ENCODE measurements at regions of chr15 and their contacts with region 1.

Region 1: GRCh38 chr15:39171944-39172368 is 408.9 kb upstream of the THBS1 start:
- DNase-seq: peak; percentile 79

Region 2: DNA sequence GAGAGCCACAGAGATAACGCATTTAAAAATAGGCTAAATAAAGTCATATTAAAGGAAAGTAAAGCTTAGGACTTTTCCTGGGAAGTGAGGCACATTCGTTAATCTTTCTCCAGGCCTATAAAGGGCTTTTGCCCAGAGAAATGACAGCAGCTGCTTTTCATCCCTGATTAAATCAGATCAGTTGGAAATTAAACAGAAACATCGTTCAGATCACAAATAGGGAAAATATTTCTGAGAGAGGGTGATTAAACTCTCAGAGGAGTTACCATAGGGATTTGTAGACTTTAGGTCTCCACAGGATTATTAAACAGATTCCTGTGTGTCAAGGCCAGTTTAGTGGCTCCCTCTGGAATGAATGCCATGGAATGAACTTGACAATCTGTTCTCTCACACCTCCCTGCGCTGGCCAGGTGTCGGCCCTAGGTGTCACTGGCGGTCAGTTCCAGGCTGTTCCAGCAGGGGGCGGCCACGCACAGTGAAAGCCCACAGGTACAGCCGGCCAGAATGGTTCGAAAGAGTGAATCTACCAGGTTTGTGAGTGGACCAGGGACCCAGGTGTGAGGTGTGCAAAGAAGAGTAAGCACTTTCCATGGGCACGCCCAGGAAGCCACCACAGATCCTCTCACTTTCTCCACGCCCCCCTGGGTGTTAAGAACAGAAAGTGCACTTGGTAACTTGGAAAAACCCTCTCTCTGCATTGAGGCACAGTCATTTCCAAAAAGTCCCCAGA is 354.4 kb before region 1 on chr15:
- intact Hi-C with region 1: loop called in 1 of 2 experiments (anchors 10 kb)
- DNase-seq: peak; percentile 90

Region 3: GRCh38 chr15:39118510-39118909 is 53.4 kb before region 1 on chr15:
- intact Hi-C with region 1: no loop called
- DNase-seq: no peak

Region 4: GRCh38 chr15:39153716-39154115 is 18.2 kb before region 1 on chr15:
- intact Hi-C with region 1: no loop called
- DNase-seq: no peak

Region 5: DNA sequence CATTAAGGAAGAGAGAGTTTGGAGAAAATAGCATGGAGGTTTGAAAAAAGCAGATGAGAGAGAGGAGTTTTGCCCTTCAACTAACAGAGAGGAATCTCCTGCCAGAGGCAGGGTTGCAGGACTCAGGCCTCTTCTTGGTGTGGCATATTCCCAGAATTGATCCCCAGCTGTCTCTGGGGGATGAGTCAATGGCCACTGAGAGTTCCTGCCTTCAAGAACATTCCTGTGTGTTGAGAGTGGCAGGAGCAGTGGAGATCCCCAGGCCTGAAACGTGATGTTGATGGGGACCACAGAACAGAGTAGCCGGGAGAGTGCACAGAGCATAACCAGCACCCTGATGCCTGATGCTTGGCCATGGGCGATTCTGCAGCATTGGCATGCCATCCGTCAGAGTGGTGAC is 60.6 kb after region 1 on chr15:
- intact Hi-C with region 1: no loop called
- DNase-seq: peak; percentile 68

Region 6: GRCh38 chr15:39301589-39301999 is 129.6 kb after region 1 on chr15:
- intact Hi-C with region 1: loop called in 1 of 2 experiments (anchors 10 kb)
- DNase-seq: no peak

Region 7: DNA sequence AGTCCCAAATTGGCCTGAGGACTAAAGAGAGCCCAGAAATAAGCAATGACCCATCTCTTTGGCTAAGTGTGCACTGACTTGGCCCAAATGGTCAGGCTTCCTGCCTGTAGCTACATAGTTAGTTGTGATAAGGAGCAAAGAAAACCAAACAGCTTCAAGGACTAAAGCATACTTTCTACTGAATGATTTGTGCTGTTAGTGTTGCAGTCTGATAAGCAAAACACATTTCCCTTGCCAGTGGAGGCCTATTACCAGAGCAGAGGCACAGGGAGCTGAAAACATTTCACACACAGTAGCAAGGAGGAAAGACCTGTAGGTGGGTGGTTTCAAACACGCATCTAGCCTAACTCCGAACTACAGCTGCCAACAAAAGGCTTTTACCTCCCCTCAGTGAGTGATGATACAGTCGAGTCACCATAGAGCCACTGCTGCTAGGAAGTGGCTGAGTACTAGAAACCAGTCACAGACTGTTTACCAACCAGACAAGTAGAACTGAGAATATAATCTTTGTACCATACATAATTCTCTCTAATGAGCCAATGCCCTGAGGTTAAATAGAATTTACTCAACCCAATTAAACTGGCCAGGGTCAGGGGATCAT is 186.6 kb after region 1 on chr15:
- intact Hi-C with region 1: loop called in 1 of 2 experiments (anchors 10 kb)
- DNase-seq: no peak